ENCODE measurements at regions of chr5 and their contacts with region 1.

Region 1: GRCh38 chr5:174724491-174725260 is at the start of gene MSX2:
- DNase-seq: peak; percentile 63
- ATAC-seq: peak; percentile 96
- H3K4me3 ChIP-seq: peak within 1 kb of the TSS; percentile 84 to 90
- H3K27ac ChIP-seq: peak within 1 kb of the TSS; percentile 82
- H3K4me1 ChIP-seq: peaks cover 31% of the 10 kb centered on the region
- H3K27me3 ChIP-seq: peaks cover 14% of the 10 kb centered on the region; the same call in 1 of the 2 replicates
- CTCF ChIP-seq: no peak; the same call in 1 of the 2 replicates
- total RNA-seq, gene MSX2: 8.5 TPM

Region 2: GRCh38 chr5:174188295-174188694 is 536.4 kb before region 1 on chr5:
- CTCF ChIA-PET with region 1: no interaction called
- POLR2A ChIA-PET with region 1: no interaction called
- in situ Hi-C with region 1: no loop called
- intact Hi-C with region 1: no loop called
- DNase-seq: no peak
- ATAC-seq: no peak
- H3K4me3 ChIP-seq: no peak overlapping the region
- H3K27ac ChIP-seq: no peak overlapping the region
- H3K4me1 ChIP-seq: no peaks in the 10 kb centered on the region
- H3K27me3 ChIP-seq: peaks cover 26% of the 10 kb centered on the region
- CTCF ChIP-seq: no peak

Region 3: GRCh38 chr5:174413563-174414314 is 310.9 kb before region 1 on chr5:
- CTCF ChIA-PET with region 1: no interaction called
- POLR2A ChIA-PET with region 1: interaction called, 23 read pairs
- in situ Hi-C with region 1: no loop called
- intact Hi-C with region 1: no loop called
- DNase-seq: no peak
- ATAC-seq: no peak
- H3K4me3 ChIP-seq: no peak overlapping the region
- H3K27ac ChIP-seq: no peak overlapping the region
- H3K4me1 ChIP-seq: no peaks in the 10 kb centered on the region
- H3K27me3 ChIP-seq: no peaks in the 10 kb centered on the region
- CTCF ChIP-seq: no peak

Region 4: GRCh38 chr5:174532455-174533453 is 191.9 kb before region 1 on chr5:
- CTCF ChIA-PET with region 1: no interaction called
- POLR2A ChIA-PET with region 1: interaction called, 6 read pairs
- in situ Hi-C with region 1: no loop called
- intact Hi-C with region 1: loop called (anchors 5 kb)
- DNase-seq: peak; percentile 88
- ATAC-seq: peak; percentile 94
- H3K4me3 ChIP-seq: peak overlapping the region in 1 of 2 experiments; percentile 44; a peak in 3 of 4 replicates
- H3K27ac ChIP-seq: peak overlapping the region; percentile 95
- H3K4me1 ChIP-seq: peaks cover 40% of the 10 kb centered on the region
- H3K27me3 ChIP-seq: no peaks in the 10 kb centered on the region
- CTCF ChIP-seq: no peak

Region 5: GRCh38 chr5:174581479-174581878 is 143.2 kb before region 1 on chr5:
- CTCF ChIA-PET with region 1: interaction called, 3 read pairs
- POLR2A ChIA-PET with region 1: no interaction called
- in situ Hi-C with region 1: no loop called
- intact Hi-C with region 1: loop called (anchors 10 kb)
- DNase-seq: no peak
- ATAC-seq: peak; percentile 72
- H3K4me3 ChIP-seq: no peak overlapping the region
- H3K27ac ChIP-seq: no peak overlapping the region
- H3K4me1 ChIP-seq: 0 out of 2 replicates have a peak, but pooled peaks cover 3% of the 10 kb centered on the region
- H3K27me3 ChIP-seq: no peaks in the 10 kb centered on the region
- CTCF ChIP-seq: peak; percentile 84

Region 6: GRCh38 chr5:174616063-174616462 is 108.6 kb before region 1 on chr5:
- CTCF ChIA-PET with region 1: interaction called, 10 read pairs
- POLR2A ChIA-PET with region 1: interaction called, 11 read pairs
- in situ Hi-C with region 1: no loop called
- intact Hi-C with region 1: no loop called
- DNase-seq: no peak
- ATAC-seq: no peak
- H3K4me3 ChIP-seq: no peak overlapping the region
- H3K27ac ChIP-seq: no peak overlapping the region
- H3K4me1 ChIP-seq: no peaks in the 10 kb centered on the region
- H3K27me3 ChIP-seq: no peaks in the 10 kb centered on the region
- CTCF ChIP-seq: no peak

Region 7: GRCh38 chr5:174624733-174625516 is 99.8 kb before region 1 on chr5:
- CTCF ChIA-PET with region 1: interaction called, 10 read pairs
- POLR2A ChIA-PET with region 1: no interaction called
- in situ Hi-C with region 1: no loop called
- intact Hi-C with region 1: no loop called
- DNase-seq: no peak
- ATAC-seq: no peak
- H3K4me3 ChIP-seq: no peak overlapping the region
- H3K27ac ChIP-seq: no peak overlapping the region
- H3K4me1 ChIP-seq: no peaks in the 10 kb centered on the region
- H3K27me3 ChIP-seq: no peaks in the 10 kb centered on the region
- CTCF ChIP-seq: no peak

Region 8: GRCh38 chr5:174649391-174649790 is 75.3 kb before region 1 on chr5:
- CTCF ChIA-PET with region 1: no interaction called
- POLR2A ChIA-PET with region 1: no interaction called
- in situ Hi-C with region 1: no loop called
- intact Hi-C with region 1: no loop called
- DNase-seq: no peak
- ATAC-seq: no peak
- H3K4me3 ChIP-seq: no peak overlapping the region
- H3K27ac ChIP-seq: no peak overlapping the region
- H3K4me1 ChIP-seq: peaks cover 3% of the 10 kb centered on the region; the same call in 1 of the 2 replicates
- H3K27me3 ChIP-seq: no peaks in the 10 kb centered on the region
- CTCF ChIP-seq: no peak

Region 9: DNA sequence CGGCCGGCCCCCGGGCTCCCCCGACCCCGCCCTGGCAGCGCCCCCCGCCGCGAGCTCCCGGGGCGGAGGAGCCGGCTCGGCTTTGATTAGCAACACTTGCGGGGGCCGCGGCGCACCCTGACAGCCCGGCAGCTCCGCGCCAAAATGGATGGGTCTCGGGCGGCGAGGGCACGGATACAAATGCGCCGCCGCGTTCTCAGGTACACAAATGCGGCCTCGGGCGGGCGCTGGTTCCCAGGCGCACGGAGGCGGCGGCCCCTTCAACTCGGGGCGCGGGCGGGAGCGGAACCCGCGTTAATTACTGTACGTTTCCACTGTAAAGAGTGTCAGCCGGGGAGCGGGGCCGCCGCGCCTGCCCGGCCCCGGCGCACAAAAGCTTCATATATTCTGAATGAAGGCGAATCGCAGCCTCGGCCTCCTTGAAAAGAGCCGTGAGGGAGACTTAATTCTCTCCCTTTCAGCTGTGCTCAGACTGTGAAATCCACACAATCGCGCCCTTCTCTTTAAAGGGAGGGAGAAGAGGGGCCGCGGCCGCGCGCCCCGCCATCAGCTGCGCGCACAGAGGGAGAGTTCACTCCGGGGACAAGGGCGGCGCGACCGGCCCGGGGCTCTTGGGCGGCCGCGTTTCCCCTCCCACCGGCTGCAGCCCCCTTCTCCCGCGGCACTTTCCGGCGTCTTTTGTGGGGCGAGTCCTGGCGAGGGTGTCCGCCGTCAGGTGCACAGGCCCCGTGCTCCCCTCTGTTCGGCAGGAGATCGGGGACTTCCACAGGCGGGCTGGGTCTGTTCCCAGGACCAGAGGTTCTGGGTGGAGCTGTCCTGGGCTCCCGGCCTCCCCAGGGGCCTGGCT is 26.7 kb after region 1 on chr5:
- CTCF ChIA-PET with region 1: interaction called, 16 read pairs
- POLR2A ChIA-PET with region 1: no interaction called
- in situ Hi-C with region 1: no loop called
- intact Hi-C with region 1: no loop called
- DNase-seq: no peak
- ATAC-seq: peak; percentile 67
- H3K4me3 ChIP-seq: peak overlapping the region; percentile 43 to 57
- H3K27ac ChIP-seq: no peak overlapping the region
- H3K4me1 ChIP-seq: no peaks in the 10 kb centered on the region
- H3K27me3 ChIP-seq: peaks cover 33% of the 10 kb centered on the region
- CTCF ChIP-seq: no peak

Measured in Panc1 (cell line).